CD4-positive, alpha-beta memory T cell (primary cell): ENCODE measurements at regions of chr12 and their contacts with region 1.

Region 1: DNA sequence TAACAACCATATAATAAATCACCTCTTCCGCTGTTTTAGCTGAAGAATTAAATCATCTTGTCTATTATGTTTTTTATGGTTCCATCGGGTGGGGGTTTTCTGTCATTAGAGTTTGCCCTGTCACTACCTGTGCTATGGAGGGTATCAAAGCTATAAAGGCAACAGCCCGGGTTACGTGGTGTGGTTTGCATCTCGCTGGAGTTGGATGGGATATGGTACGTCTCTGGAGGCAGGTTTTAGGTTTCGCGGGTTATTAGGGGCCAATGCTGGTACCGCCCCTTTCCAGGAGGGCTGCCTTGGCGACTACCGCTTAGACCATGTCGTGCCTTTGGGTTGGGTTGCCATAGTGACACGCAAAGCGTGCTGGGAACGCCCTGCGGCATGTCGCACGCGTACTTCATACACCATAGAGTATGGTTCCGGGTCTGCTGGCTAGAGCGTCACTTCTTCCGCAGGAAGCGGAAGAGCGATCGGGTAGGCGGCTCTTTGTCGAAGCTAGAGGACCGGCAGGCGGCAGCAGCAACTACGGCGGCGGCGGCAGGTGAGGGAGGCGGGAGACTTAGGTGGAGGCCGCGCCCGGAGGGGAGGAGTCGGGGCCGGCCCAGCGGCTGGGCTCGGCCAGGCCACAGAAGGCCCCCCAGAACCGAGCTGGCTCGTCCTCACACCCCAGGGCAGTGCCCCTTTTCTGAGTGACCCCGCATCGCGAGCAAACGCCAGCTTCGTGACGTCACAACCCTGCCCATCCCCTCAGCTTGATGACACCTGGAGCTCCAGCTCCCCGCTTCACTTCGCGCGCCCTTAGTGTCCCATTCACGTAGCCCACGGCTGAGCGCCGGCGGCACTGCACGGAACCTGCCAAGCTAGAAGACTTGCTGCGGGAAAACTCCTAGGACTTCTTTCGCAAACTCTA is at the start of gene ZC3H10:
- DNase-seq: peak; percentile 96 to 99 (median 98)
- H3K4me3 ChIP-seq: peak within 1 kb of the TSS; percentile 99
- H3K4me3 Mint-ChIP-seq: peak within 1 kb of the TSS; percentile 95 to 99 (median 98)
- H3K27ac ChIP-seq: peak within 1 kb of the TSS; percentile 89
- H3K27ac Mint-ChIP-seq: peak within 1 kb of the TSS; percentile 94 to 100 (median 99)
- H3K4me1 ChIP-seq: peaks cover 34% of the 10 kb centered on the region
- H3K4me1 Mint-ChIP-seq: peaks cover 22 to 44% (median 31%) of the 10 kb centered on the region in 4 donors
- H3K27me3 ChIP-seq: no peaks in the 10 kb centered on the region
- H3K27me3 Mint-ChIP-seq: no peaks in the 10 kb centered on the region
- total RNA-seq, gene ZC3H10: 16.3 to 19.6 TPM

Region 2: GRCh38 chr12:54616933-54617680 is 1500.9 kb before region 1 on chr12:
- CTCF ChIA-PET with region 1: no interaction called
- POLR2A ChIA-PET with region 1: no interaction called
- intact Hi-C with region 1: no loop called
- DNase-seq: no peak
- H3K4me3 ChIP-seq: no peak overlapping the region
- H3K4me3 Mint-ChIP-seq: no peak overlapping the region
- H3K27ac ChIP-seq: no peak overlapping the region
- H3K27ac Mint-ChIP-seq: no peak overlapping the region
- H3K4me1 ChIP-seq: peaks cover 3% of the 10 kb centered on the region
- H3K4me1 Mint-ChIP-seq: no peaks in the 10 kb centered on the region
- H3K27me3 ChIP-seq: peaks cover 28% of the 10 kb centered on the region
- H3K27me3 Mint-ChIP-seq: peaks cover 28 to 42% of the 10 kb centered on the region in 2 donors

Region 3: GRCh38 chr12:55926738-55927587 is 191.1 kb before region 1 on chr12:
- CTCF ChIA-PET with region 1: no interaction called
- POLR2A ChIA-PET with region 1: interaction called, 25 read pairs
- intact Hi-C with region 1: loop called (anchors 5 kb)
- DNase-seq: peak; percentile 83 to 91 (median 85)
- H3K4me3 ChIP-seq: peak overlapping the region; percentile 95 to 100
- H3K4me3 Mint-ChIP-seq: peak overlapping the region; percentile 97 to 100 (median 99)
- H3K27ac ChIP-seq: peak overlapping the region; percentile 88
- H3K27ac Mint-ChIP-seq: peak overlapping the region; percentile 92 to 99 (median 96)
- H3K4me1 ChIP-seq: peaks cover 51% of the 10 kb centered on the region
- H3K4me1 Mint-ChIP-seq: peaks cover 36 to 79% (median 46%) of the 10 kb centered on the region in 4 donors
- H3K27me3 ChIP-seq: no peaks in the 10 kb centered on the region
- H3K27me3 Mint-ChIP-seq: no peaks in the 10 kb centered on the region

Region 4: DNA sequence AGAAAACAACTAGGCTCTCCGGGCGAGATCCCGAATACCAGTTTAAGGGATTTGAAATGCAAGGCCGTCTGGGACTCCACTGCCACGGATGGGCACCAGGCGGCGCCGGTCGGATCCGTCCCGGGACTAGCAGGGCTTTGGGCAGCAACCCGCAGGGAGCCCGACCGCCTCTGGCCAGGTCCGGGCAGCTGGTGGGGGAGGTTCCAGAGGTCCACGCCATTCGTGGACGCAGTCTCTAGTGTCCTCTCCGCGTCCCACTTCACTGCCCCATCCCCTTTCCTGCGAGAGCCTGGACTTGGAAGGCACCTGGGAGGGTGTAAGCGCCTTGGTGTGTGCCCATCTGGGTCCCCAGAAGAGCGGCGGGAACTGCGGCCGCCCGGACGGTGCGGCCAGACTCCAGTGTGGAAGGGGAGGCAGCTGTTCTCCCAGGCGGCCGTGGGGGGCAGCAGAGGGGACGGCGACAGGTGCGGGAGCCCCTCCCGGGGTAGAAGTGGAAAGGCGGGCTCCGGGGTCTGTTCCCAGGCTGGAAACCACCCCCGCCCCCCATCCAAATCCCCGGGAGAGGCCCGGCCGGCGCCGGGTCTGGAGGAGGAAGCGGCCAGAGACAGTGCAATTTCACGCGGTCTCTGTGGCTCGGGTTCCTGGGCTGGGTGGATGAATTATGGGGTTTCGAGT is 38.9 kb before region 1 on chr12:
- CTCF ChIA-PET with region 1: interaction called, 8 read pairs
- POLR2A ChIA-PET with region 1: interaction called, 23 read pairs
- intact Hi-C with region 1: loop called (anchors 1 kb)
- DNase-seq: peak; percentile 27 to 65 (median 40)
- H3K4me3 ChIP-seq: peak overlapping the region; percentile 52 to 86
- H3K4me3 Mint-ChIP-seq: peak overlapping the region; percentile 84 to 91 (median 88)
- H3K27ac ChIP-seq: peak overlapping the region; percentile 2
- H3K27ac Mint-ChIP-seq: peak overlapping the region in 6 of 7 donors; percentile 36 to 91 (median 72)
- H3K4me1 ChIP-seq: peaks cover 20% of the 10 kb centered on the region
- H3K4me1 Mint-ChIP-seq: peaks cover 0 to 25% (median 5%) of the 10 kb centered on the region in 4 donors
- H3K27me3 ChIP-seq: peaks cover 6% of the 10 kb centered on the region
- H3K27me3 Mint-ChIP-seq: peaks cover 0 to 3% of the 10 kb centered on the region in 2 donors

Region 5: GRCh38 chr12:56143870-56144269 is 25.8 kb after region 1 on chr12:
- CTCF ChIA-PET with region 1: interaction called, 9 read pairs
- POLR2A ChIA-PET with region 1: interaction called, 16 read pairs
- intact Hi-C with region 1: no loop called
- DNase-seq: no peak
- H3K4me3 ChIP-seq: no peak overlapping the region
- H3K4me3 Mint-ChIP-seq: peak overlapping the region in 1 of 8 donors; percentile 10
- H3K27ac ChIP-seq: no peak overlapping the region
- H3K27ac Mint-ChIP-seq: peak overlapping the region; percentile 51 to 90 (median 83)
- H3K4me1 ChIP-seq: peaks cover 39% of the 10 kb centered on the region
- H3K4me1 Mint-ChIP-seq: peaks cover 24 to 53% (median 37%) of the 10 kb centered on the region in 4 donors
- H3K27me3 ChIP-seq: no peaks in the 10 kb centered on the region
- H3K27me3 Mint-ChIP-seq: no peaks in the 10 kb centered on the region

Region 6: GRCh38 chr12:56224102-56224701 is 106.2 kb after region 1 on chr12 and contains the start of gene NABP2:
- CTCF ChIA-PET with region 1: interaction called, 61 read pairs
- POLR2A ChIA-PET with region 1: interaction called, 98 read pairs
- intact Hi-C with region 1: loop called (anchors 1 kb)
- DNase-seq: peak; percentile 88 to 93 (median 89)
- H3K4me3 ChIP-seq: peak within 1 kb of the TSS; percentile 28 to 79
- H3K4me3 Mint-ChIP-seq: peak within 1 kb of the TSS; percentile 83 to 99 (median 87)
- H3K27ac ChIP-seq: peak within 1 kb of the TSS; percentile 83
- H3K27ac Mint-ChIP-seq: peak within 1 kb of the TSS; percentile 90 to 100 (median 99)
- H3K4me1 ChIP-seq: peaks cover 42% of the 10 kb centered on the region
- H3K4me1 Mint-ChIP-seq: peaks cover 24 to 58% (median 43%) of the 10 kb centered on the region in 4 donors
- H3K27me3 ChIP-seq: no peaks in the 10 kb centered on the region
- H3K27me3 Mint-ChIP-seq: no peaks in the 10 kb centered on the region
- total RNA-seq, gene NABP2: 16.9 to 19.1 TPM

Region 7: DNA sequence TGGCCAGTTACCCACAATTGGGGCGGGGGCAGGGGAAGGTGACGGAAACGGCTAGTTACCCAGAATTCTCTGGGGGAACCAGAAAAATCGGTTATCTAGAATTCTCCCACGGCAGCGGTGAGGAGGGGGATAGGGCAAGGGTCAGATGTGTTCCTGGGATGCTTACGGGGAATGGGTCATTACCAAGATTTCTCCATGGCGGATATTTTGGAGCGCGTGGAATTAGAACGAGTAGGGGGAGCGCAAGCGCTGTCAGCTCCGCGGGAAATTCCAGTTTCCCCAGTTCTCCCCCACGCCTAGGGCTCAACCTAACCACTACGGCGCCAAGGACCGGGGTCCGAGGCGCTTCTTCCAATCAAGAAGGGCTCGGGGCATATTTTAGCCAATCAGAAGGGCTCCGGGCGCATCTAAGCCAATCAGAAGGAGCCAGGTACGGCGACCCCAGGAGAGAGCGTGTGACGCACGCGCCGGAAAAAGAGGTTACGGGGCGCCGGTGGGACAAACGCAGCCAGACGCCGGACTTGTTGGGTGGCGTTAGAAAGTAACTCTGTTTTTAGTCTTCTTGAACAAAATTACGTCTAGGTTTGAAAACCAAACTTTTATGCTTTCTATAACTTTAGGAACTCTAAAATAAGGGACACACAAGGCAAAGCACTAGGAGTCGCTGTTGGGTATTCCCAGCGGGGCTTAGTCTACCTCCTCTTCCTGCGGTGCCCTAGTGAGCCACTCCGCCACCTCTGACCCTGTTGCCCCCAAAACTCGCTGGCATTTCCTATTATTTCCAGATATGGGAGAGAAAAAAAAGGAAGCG is 215.9 kb after region 1 on chr12 and contains the start of gene PAN2:
- CTCF ChIA-PET with region 1: interaction called, 4 read pairs
- POLR2A ChIA-PET with region 1: interaction called, 10 read pairs
- intact Hi-C with region 1: no loop called
- DNase-seq: peak; percentile 92 to 96 (median 93)
- H3K4me3 ChIP-seq: peak within 1 kb of the TSS; percentile 69 to 83
- H3K4me3 Mint-ChIP-seq: peak within 1 kb of the TSS; percentile 89 to 99 (median 94)
- H3K27ac ChIP-seq: peak within 1 kb of the TSS; percentile 99
- H3K27ac Mint-ChIP-seq: peak within 1 kb of the TSS; percentile 99 to 100 (median 100)
- H3K4me1 ChIP-seq: peaks cover 37% of the 10 kb centered on the region
- H3K4me1 Mint-ChIP-seq: peaks cover 23 to 50% (median 30%) of the 10 kb centered on the region in 4 donors
- H3K27me3 ChIP-seq: no peaks in the 10 kb centered on the region
- H3K27me3 Mint-ChIP-seq: peaks cover 0 to 2% of the 10 kb centered on the region in 2 donors
- total RNA-seq, gene PAN2: 193 to 203 TPM

Region 8: DNA sequence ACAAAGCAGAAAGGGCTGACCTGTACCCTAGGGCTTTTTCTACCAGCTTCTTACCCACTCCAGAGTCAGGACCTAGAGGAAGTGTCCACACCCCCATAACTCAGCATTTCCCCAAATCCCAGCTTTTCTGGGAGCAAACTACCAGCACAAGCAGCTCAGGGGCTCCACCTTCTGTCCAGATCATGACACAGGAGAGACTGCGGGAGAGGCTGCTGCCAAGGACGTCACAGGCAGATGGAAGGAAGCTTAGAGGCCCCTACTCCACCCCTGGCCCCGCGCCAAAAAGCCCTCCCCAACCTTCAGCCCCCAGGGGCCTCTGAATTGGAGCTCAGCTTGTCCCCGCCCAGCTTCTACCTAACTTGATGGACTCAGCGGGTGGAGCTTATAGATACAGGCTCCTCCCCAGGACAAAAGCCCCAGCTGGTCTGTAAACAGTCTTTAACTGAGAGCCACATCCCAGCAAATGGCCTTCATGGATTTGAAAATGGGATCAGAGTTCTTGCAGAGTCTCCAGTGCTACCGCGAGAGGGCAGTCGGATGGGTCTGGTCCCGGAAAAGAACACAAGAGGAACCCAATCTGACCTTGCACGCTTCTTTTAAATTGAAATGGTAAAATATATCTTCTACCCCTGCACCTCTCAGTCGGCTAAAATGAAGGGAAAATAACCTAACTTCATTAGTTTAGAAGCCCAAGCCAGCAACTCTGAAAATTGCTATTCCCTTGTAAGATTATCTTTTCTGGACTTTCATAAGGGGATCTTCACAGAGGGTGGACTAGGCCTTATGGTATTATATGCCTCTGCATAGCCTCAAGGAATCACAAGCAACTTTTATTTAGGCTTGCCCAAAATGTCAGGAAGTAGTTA is 518.9 kb after region 1 on chr12:
- CTCF ChIA-PET with region 1: no interaction called
- POLR2A ChIA-PET with region 1: interaction called, 7 read pairs
- intact Hi-C with region 1: loop called (anchors 5 kb)
- DNase-seq: peak; percentile 93 to 99 (median 96)
- H3K4me3 ChIP-seq: peak overlapping the region; percentile 58 to 64
- H3K4me3 Mint-ChIP-seq: peak overlapping the region; percentile 86 to 99 (median 96)
- H3K27ac ChIP-seq: peak overlapping the region; percentile 81
- H3K27ac Mint-ChIP-seq: peak overlapping the region; percentile 82 to 99 (median 97)
- H3K4me1 ChIP-seq: peaks cover 44% of the 10 kb centered on the region
- H3K4me1 Mint-ChIP-seq: peaks cover 31 to 59% (median 46%) of the 10 kb centered on the region in 4 donors
- H3K27me3 ChIP-seq: no peaks in the 10 kb centered on the region
- H3K27me3 Mint-ChIP-seq: no peaks in the 10 kb centered on the region